Ovary (tissue), 10 donors: ENCODE measurements at regions of chr20 and their contacts with region 1.

Region 1: GRCh38 chr20:47272893-47273590 is 83.5 kb downstream of the ZMYND8 start:
- DNase-seq: peak in 3 of 5 donors; percentile 31 to 67 (median 46)
- H3K4me3 ChIP-seq: no peak overlapping the region
- H3K27ac ChIP-seq: peak overlapping the region; percentile 33 to 51
- H3K4me1 ChIP-seq: peaks cover 2% of the 10 kb centered on the region
- H3K27me3 ChIP-seq: no peaks in the 10 kb centered on the region
- CTCF ChIP-seq: peak; percentile 74 to 98 (median 97)
- EP300 ChIP-seq: no peak
- POLR2A ChIP-seq: no peak

Region 2: DNA sequence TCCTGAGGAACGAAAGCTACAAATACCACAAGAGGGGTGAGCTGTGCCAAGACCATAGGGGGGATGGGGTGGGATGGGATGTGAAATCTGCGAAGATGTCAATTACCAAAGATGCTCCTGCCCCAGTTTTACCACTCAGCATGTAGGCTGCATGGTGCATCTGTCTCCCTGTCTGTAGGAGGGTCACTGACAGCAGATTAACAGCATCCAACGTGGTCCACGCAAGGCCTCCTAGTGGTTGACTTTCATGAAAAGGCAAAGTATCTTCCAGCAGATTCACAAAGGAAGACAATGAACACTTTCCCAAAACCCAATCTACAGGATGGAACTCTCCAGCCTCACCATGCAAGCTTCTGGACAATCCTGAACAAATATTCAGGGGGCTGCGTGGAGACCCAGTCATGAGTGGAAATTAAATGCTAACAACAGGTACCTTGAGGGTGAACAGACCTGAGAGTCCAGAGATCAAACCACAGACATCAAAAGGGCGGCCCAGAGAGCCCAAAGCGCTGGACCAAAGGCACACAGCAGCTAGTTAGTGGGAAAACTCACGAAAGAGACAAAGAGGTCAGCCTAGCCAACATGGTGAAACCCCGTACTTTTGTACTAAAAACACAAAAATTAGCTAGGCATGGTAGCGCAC is 39.1 kb after region 1 on chr20:
- intact Hi-C with region 1: loop called in 1 of 4 experiments (anchors 5 kb)
- DNase-seq: no peak
- H3K4me3 ChIP-seq: no peak overlapping the region
- H3K27ac ChIP-seq: no peak overlapping the region
- H3K4me1 ChIP-seq: peaks cover 19% of the 10 kb centered on the region
- H3K27me3 ChIP-seq: no peaks in the 10 kb centered on the region
- CTCF ChIP-seq: no peak
- EP300 ChIP-seq: no peak
- POLR2A ChIP-seq: no peak

Region 3: DNA sequence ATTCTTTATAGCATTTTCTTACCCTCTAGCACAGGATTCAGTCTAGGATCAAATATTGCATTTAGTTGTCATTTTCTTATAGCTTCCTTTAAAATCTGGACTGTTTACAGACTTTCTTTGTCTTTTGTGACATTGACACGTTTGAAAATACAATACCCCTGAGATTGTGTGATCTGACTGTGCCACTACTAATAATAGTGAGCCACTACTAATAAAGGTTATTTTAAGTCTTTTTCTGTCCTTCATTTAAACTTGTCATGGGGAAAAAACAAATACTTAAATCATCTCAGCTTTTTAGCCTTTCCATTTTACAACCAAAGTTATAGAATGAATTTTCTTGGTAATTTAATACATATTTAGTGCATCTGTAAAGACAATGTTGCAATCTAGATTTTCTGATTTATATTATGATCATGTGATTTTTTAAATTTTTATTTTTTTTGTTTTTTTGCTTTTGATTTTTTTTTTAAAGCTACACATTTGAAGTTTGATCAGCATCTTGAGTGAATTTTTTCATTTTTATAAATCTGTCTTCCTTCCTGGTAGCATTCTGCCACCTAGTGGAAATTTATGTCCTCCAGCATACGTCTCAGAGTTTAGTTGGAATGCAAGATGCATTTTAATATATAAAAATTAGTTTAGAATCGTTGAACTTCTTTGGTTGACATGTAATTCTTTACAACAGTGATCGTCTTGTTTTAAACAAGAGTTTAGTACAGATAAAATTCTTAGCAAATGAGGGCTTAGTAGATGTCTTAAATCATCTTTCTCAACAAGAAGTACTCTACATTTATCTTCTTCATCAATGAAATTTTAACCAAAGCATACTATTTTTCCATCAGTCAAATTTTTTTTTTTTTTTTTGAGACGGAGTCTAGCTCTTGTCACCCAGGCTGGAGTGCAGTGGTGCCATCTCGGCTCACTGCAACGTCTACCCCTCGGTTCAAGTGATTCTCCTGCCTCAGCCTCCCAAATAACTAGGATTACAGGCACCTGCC is 348.1 kb after region 1 on chr20:
- intact Hi-C with region 1: loop called in 2 of 4 experiments (anchors 10 kb)
- DNase-seq: no peak
- H3K4me3 ChIP-seq: no peak overlapping the region
- H3K27ac ChIP-seq: no peak overlapping the region
- H3K4me1 ChIP-seq: no peaks in the 10 kb centered on the region
- H3K27me3 ChIP-seq: no peaks in the 10 kb centered on the region
- CTCF ChIP-seq: peak; percentile 65 to 78 (median 66)
- EP300 ChIP-seq: no peak
- POLR2A ChIP-seq: no peak

Region 4: GRCh38 chr20:49203746-49204145 is 1930.7 kb after region 1 on chr20:
- intact Hi-C with region 1: no loop called
- DNase-seq: no peak
- H3K4me3 ChIP-seq: no peak overlapping the region
- H3K27ac ChIP-seq: no peak overlapping the region
- H3K4me1 ChIP-seq: no peaks in the 10 kb centered on the region
- H3K27me3 ChIP-seq: no peaks in the 10 kb centered on the region
- CTCF ChIP-seq: no peak
- EP300 ChIP-seq: no peak
- POLR2A ChIP-seq: no peak